ENCODE measurements at regions of chr5 and their contacts with region 1.

Region 1: DNA sequence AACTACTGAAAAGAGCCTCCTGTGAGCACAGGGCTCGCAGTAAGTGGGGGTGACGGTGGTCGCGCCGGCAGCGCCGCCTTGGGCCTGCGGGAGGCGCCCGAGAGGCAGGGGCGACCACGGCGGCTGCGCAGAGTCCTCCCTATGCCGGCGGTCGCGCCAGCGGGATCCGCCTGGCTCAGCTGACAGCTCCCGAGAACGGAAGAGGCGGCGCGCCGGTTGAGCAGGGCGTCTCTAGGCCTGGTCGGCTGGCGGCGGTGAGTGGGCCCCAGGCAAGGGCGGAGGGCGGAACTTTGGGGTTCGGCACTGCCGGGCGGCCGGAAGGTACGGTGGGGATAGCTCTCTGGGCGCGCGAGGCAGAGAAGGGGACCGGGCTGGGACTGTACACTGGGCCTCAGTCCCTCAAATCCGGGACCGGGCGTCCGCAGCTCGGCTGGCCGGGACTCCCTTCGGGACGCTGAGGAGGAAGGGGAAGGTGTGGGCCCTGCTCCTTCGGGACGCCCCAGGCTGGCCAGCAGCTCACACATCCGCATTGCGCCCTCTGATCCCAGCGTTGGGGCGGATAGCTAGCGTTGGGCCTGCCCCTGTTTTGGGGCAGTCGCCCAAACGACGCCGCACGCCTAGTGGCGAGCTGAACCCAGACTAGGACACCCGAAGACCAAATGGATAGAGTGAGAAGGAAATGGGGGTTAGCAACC is at the start of gene RNF14:
- DNase-seq: peak; percentile 74
- ATAC-seq: peak; percentile 95
- H3K4me3 ChIP-seq: peak within 1 kb of the TSS; percentile 73
- H3K27ac ChIP-seq: peak within 1 kb of the TSS; percentile 96
- H3K4me1 ChIP-seq: peaks cover 8% of the 10 kb centered on the region
- H3K27me3 ChIP-seq: no peaks in the 10 kb centered on the region
- CTCF ChIP-seq: peak; percentile 84 to 98 (median 95)
- EP300 ChIP-seq: no peak
- POLR2A ChIP-seq: peak; percentile 97
- RAD21 ChIP-seq: no peak
- polyA plus RNA-seq, gene RNF14: 28.1 to 34.4 TPM

Region 2: GRCh38 chr5:141182248-141182647 is 786.8 kb before region 1 on chr5 and contains the start of gene PCDHB16:
- CTCF ChIA-PET with region 1: no interaction called
- POLR2A ChIA-PET with region 1: no interaction called
- RAD21 ChIA-PET with region 1: no interaction called
- SMC1A ChIA-PET with region 1: no interaction called
- in situ Hi-C with region 1: no loop called
- intact Hi-C with region 1: no loop called
- DNase-seq: no peak
- ATAC-seq: no peak
- H3K4me3 ChIP-seq: no peak within 1 kb of the TSS
- H3K27ac ChIP-seq: no peak within 1 kb of the TSS
- H3K4me1 ChIP-seq: no peaks in the 10 kb centered on the region
- H3K27me3 ChIP-seq: no peaks in the 10 kb centered on the region
- CTCF ChIP-seq: no peak; a peak in 1 of 6 replicates
- EP300 ChIP-seq: no peak
- POLR2A ChIP-seq: no peak
- RAD21 ChIP-seq: peak; percentile 17; the same call in 1 of the 2 replicates
- polyA plus RNA-seq, gene PCDHB16: not detected

Region 3: DNA sequence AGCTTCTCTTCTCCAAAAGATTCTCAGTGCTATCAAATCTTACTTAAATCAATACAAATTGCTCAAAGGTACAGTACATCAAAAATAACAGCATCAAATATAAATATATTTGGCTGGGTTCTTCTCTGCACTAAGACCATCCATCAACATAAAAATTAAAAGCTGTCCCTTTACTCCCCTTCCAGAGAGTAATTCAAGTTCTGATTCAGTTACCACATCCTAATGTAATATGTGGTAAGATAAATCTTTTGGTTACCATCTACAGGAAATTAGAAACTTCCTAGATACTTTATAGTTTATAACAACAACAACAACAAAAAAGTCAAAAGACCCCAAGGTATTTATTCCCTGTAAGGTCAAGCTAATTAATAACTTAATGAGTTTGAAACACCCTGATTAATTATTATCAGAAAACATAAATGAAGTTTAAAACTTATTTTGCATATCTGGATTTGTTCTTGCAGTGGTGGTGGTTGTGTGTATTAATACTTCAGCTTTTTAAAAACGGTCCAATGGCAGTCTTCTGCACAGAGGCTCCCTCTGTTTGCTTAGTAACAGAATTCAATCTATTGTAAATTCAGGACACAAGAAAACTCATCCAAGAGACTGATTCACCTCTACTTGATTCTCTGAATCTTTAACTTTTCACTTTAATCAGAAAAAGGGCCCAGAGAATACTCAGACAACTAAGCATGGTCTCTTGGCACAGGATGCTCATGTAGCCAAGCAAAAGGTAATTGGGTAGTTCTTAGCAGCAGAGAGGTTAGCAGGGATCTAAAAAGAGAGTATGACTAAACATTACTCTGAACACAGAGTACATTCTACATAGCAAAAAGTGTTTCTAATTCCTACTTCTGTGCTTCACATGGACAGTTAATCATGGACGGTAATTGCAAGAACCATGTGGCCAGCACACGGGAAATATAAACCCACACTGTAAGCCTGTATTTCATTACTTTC is 370.4 kb before region 1 on chr5:
- CTCF ChIA-PET with region 1: no interaction called
- POLR2A ChIA-PET with region 1: no interaction called
- RAD21 ChIA-PET with region 1: no interaction called
- SMC1A ChIA-PET with region 1: no interaction called
- in situ Hi-C with region 1: no loop called
- intact Hi-C with region 1: loop called (anchors 10 kb)
- DNase-seq: no peak
- ATAC-seq: peak; percentile 68
- H3K4me3 ChIP-seq: no peak overlapping the region
- H3K27ac ChIP-seq: no peak overlapping the region; the same call in 1 of the 2 replicates
- H3K4me1 ChIP-seq: peaks cover 11% of the 10 kb centered on the region
- H3K27me3 ChIP-seq: no peaks in the 10 kb centered on the region
- CTCF ChIP-seq: no peak
- EP300 ChIP-seq: no peak
- POLR2A ChIP-seq: no peak
- RAD21 ChIP-seq: no peak

Region 4: DNA sequence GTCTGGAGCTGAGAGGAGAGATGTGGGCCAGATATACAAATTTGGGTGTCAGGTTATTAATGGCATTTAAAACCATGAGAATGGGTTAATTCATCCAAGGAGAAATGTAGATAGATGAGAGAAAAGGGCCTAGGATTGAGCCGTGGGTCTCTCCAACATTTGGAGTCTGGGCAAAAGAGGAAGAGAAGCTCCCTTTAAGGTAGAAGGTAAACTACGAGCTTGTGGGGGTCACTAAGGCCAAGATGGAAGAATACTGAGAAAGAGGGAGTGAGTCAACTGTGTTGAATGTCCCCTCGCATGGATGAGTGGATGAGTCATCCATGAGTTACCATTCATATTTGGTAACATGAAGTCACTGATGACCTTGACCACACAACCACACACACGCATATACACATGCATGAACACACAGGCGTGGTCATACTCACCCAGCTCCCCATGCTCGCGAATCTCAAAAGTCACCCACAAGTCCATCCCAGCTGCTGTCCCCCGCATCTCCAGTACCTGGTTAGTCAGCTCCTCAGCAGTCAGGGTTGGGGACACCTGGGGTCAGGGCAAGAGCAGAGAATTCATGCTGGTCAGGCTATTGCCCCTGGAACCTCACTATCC is 311.0 kb before region 1 on chr5:
- CTCF ChIA-PET with region 1: interaction called, 12 read pairs
- POLR2A ChIA-PET with region 1: no interaction called
- RAD21 ChIA-PET with region 1: no interaction called
- SMC1A ChIA-PET with region 1: no interaction called
- in situ Hi-C with region 1: no loop called
- intact Hi-C with region 1: loop called (anchors 10 kb)
- DNase-seq: no peak
- ATAC-seq: peak; percentile 88
- H3K4me3 ChIP-seq: no peak overlapping the region
- H3K27ac ChIP-seq: no peak overlapping the region
- H3K4me1 ChIP-seq: no peaks in the 10 kb centered on the region
- H3K27me3 ChIP-seq: no peaks in the 10 kb centered on the region
- CTCF ChIP-seq: no peak
- EP300 ChIP-seq: peak in 1 of 2 experiments; percentile 42; a peak in 1 of 4 replicates
- POLR2A ChIP-seq: no peak
- RAD21 ChIP-seq: no peak

Region 5: GRCh38 chr5:141923448-141924352 is 45.4 kb before region 1 on chr5 and contains the start of gene DELE1:
- CTCF ChIA-PET with region 1: interaction called, 19 read pairs
- POLR2A ChIA-PET with region 1: interaction called, 22 read pairs
- RAD21 ChIA-PET with region 1: interaction called, 14 read pairs
- SMC1A ChIA-PET with region 1: interaction called, 8 read pairs
- in situ Hi-C with region 1: no loop called
- intact Hi-C with region 1: loop called (anchors 2 kb)
- DNase-seq: peak; percentile 70
- ATAC-seq: peak; percentile 98
- H3K4me3 ChIP-seq: peak within 1 kb of the TSS; percentile 94
- H3K27ac ChIP-seq: peak within 1 kb of the TSS; percentile 90
- H3K4me1 ChIP-seq: peaks cover 4% of the 10 kb centered on the region; the same call in 1 of the 2 replicates
- H3K27me3 ChIP-seq: no peaks in the 10 kb centered on the region
- CTCF ChIP-seq: no peak
- EP300 ChIP-seq: 0 out of 4 replicates have a peak, but pooled peaks of 1 of the 2 experiments have one; percentile 6
- POLR2A ChIP-seq: peak; percentile 98
- RAD21 ChIP-seq: no peak
- polyA plus RNA-seq, gene DELE1: 18.9 to 21.4 TPM

Region 6: GRCh38 chr5:142012792-142013388 is 43.8 kb after region 1 on chr5 and contains the start of gene GNPDA1:
- CTCF ChIA-PET with region 1: interaction called, 53 read pairs
- POLR2A ChIA-PET with region 1: interaction called, 7 read pairs
- RAD21 ChIA-PET with region 1: interaction called, 15 read pairs
- SMC1A ChIA-PET with region 1: interaction called, 10 read pairs
- in situ Hi-C with region 1: no loop called
- intact Hi-C with region 1: no loop called
- DNase-seq: no peak
- ATAC-seq: peak; percentile 82
- H3K4me3 ChIP-seq: peak within 1 kb of the TSS; percentile 66
- H3K27ac ChIP-seq: no peak within 1 kb of the TSS
- H3K4me1 ChIP-seq: peaks cover 18% of the 10 kb centered on the region
- H3K27me3 ChIP-seq: peaks cover 0 to 2% of the 10 kb centered on the region in 2 experiments; a peak in 1 of 4 replicates
- CTCF ChIP-seq: no peak; a peak in 1 of 6 replicates
- EP300 ChIP-seq: no peak
- POLR2A ChIP-seq: peak; percentile 74
- RAD21 ChIP-seq: no peak
- polyA plus RNA-seq, gene GNPDA1: 5.8 to 11.9 TPM